AG04450 (cell line): ENCODE measurements at regions of chr9 and their contacts with region 1.

Region 1: GRCh38 chr9:101449140-101449721 is 13.7 kb upstream of the ALDOB start:
- DNase-seq: no peak
- H3K4me3 ChIP-seq: peak overlapping the region; percentile 72
- H3K27ac ChIP-seq: no peak overlapping the region
- H3K27me3 ChIP-seq: no peaks in the 10 kb centered on the region
- CTCF ChIP-seq: peak; percentile 69

Region 2: DNA sequence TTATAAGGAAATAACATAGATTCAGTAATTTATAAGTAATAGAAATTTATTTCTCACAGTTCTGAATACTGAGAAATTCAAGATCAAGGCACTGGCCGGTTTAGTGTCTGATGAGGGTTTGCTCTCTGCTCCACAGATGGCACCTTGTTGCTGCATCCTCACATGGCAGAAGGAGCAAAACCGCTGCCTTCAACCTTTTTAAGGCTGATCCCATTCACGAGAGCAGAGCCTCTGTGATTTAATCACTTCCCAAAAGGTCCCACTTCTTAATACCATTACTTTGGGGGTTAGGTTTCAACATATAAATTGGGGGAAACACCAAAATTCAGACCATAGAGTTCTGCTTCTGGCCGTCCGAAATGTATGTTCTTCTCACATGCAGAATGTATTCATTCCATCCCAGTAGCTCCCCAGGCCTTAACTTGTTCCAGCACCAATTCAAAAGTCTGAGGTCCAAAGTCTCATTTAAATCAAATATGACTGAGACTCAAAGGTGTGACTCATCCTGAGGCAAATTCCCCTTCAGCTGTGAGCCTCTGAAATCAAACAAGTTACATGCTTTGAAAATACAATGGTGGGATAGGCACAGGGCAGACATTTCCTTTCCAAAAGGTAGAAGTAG is 95.0 kb before region 1 on chr9:
- CTCF ChIA-PET with region 1: no interaction called
- POLR2A ChIA-PET with region 1: no interaction called
- DNase-seq: no peak
- H3K4me3 ChIP-seq: no peak overlapping the region
- H3K27ac ChIP-seq: no peak overlapping the region
- H3K27me3 ChIP-seq: no peaks in the 10 kb centered on the region
- CTCF ChIP-seq: no peak

Region 3: GRCh38 chr9:101366038-101366756 is 83.0 kb before region 1 on chr9:
- CTCF ChIA-PET with region 1: no interaction called
- POLR2A ChIA-PET with region 1: no interaction called
- DNase-seq: no peak
- H3K4me3 ChIP-seq: no peak overlapping the region
- H3K27ac ChIP-seq: no peak overlapping the region
- H3K27me3 ChIP-seq: no peaks in the 10 kb centered on the region
- CTCF ChIP-seq: no peak

Region 4: DNA sequence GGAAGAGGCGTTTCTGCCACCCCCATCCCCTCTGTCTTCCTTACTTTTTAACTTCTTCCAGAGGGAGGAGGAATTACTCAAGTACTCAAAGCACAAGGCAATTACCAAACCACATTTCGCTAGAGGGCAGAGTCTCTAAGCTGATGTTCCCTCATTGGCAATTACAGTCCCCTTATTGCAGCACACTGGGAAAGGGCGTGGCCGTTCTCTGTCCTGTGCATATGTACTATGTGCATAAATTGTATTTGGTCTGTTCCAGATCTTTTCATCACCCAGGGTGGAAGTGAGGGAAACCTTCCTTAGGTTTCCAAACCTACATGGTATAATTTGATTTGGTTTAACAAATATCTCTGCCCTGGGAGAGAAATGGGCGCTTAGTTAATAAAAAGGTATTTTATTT is 16.2 kb after region 1 on chr9:
- CTCF ChIA-PET with region 1: interaction called, 30 read pairs
- POLR2A ChIA-PET with region 1: no interaction called
- DNase-seq: no peak
- H3K4me3 ChIP-seq: no peak overlapping the region
- H3K27ac ChIP-seq: no peak overlapping the region
- H3K27me3 ChIP-seq: no peaks in the 10 kb centered on the region
- CTCF ChIP-seq: peak; percentile 51

Region 5: GRCh38 chr9:101479338-101480030 is 30.3 kb after region 1 on chr9:
- CTCF ChIA-PET with region 1: interaction called, 11 read pairs
- POLR2A ChIA-PET with region 1: no interaction called
- DNase-seq: no peak
- H3K4me3 ChIP-seq: no peak overlapping the region
- H3K27ac ChIP-seq: no peak overlapping the region
- H3K27me3 ChIP-seq: no peaks in the 10 kb centered on the region
- CTCF ChIP-seq: no peak

Region 6: GRCh38 chr9:101530077-101530711 is 81.0 kb after region 1 on chr9:
- CTCF ChIA-PET with region 1: interaction called, 52 read pairs
- POLR2A ChIA-PET with region 1: no interaction called
- DNase-seq: peak; percentile 63
- H3K4me3 ChIP-seq: no peak overlapping the region
- H3K27ac ChIP-seq: no peak overlapping the region
- H3K27me3 ChIP-seq: no peaks in the 10 kb centered on the region
- CTCF ChIP-seq: peak; percentile 89

Region 7: DNA sequence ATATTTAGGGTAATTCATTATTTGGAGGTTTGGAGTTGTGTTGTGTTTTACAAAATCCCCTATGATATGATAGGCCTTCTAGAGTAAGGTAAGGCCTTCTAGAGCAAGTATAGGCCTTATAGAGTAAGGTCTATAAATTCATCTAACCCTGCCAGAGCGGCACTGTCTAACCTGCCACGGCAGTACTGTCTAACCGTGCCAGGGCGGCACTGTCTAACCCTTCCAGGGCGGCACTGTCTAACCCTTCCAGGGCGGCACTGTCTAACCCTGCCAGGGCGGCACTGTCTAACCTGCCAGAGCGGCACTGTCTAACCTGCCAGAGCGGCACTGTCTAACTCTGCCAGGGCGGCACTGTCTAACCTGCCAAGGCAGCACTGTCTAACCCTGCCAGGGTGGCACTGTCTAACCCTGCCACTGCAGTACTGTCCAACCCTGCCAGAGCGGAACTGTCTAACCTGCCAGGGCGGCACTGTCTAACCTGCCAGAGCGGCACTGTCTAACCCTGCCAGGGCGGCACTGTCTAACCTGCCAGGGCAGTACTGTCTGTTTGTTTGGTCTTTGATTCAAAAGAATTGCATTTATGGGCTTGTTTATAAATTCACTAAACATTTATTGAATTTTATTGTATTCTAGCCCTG is 94.0 kb after region 1 on chr9:
- CTCF ChIA-PET with region 1: interaction called, 13 read pairs
- POLR2A ChIA-PET with region 1: no interaction called
- DNase-seq: no peak
- H3K4me3 ChIP-seq: no peak overlapping the region
- H3K27ac ChIP-seq: no peak overlapping the region
- H3K27me3 ChIP-seq: no peaks in the 10 kb centered on the region
- CTCF ChIP-seq: no peak

Region 8: DNA sequence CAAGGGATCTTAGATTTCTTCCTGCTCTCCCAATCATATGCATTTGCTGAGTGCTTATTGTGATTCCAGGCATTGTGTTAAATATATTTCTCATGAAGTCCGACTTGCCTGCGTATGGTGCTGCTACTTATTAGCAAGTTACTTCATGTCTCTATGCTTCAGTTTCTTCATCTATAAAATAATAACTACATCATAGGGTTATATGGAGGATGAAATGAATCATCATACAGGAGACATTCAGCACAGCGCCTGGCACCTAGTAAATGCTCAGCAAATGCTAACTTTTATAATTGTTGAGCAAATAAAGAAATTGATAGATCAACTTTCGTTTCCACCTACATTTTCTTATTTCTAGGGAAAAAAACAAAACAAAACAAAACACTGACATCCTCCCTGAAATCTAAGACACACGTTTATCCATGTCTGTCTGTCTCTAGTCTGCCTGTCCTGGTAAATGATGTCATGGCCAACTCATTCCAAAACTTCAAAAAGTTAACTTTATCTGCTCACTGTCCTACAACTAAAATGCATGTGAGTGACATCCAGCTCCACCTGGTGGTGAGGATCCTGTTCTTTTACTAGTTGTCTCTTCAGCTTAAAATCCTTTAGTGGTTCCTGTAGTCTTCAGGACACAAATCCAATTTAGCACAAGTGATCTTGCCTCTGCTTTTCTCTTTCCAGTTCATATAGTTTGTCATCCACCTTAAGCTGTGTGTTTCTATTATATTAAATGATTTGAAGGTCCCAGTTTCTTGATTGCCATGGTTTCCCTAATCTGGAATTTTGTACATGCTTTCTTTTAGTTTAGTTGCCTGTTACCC is 117.9 kb after region 1 on chr9:
- CTCF ChIA-PET with region 1: interaction called, 24 read pairs
- POLR2A ChIA-PET with region 1: no interaction called
- DNase-seq: no peak
- H3K4me3 ChIP-seq: no peak overlapping the region
- H3K27ac ChIP-seq: no peak overlapping the region
- H3K27me3 ChIP-seq: no peaks in the 10 kb centered on the region
- CTCF ChIP-seq: peak; percentile 68

Region 9: DNA sequence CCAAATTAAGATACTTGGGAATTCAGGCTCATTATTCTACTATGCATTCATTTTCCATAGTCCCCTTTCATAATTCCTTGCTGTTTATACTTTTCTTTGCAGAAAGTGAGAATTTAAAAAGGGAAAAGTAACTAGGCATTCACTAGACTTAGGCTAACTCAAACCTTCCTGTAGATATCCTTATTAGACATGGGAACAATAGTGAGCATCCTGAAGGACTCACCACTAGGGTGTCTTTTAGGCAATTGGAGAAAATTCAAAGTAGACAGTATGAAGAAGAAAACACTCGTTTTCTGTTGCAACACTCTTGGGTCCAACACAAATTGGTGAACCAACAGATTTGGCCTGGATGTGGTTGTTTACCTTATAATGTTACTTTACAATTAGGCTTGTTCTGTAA is 502.4 kb after region 1 on chr9:
- CTCF ChIA-PET with region 1: no interaction called
- POLR2A ChIA-PET with region 1: no interaction called
- DNase-seq: no peak
- H3K4me3 ChIP-seq: no peak overlapping the region
- H3K27ac ChIP-seq: no peak overlapping the region
- H3K27me3 ChIP-seq: no peaks in the 10 kb centered on the region
- CTCF ChIP-seq: no peak